Naive thymus-derived CD4-positive, alpha-beta T cell (primary cell): ENCODE measurements at regions of chr13 and their contacts with region 1.

Region 1: DNA sequence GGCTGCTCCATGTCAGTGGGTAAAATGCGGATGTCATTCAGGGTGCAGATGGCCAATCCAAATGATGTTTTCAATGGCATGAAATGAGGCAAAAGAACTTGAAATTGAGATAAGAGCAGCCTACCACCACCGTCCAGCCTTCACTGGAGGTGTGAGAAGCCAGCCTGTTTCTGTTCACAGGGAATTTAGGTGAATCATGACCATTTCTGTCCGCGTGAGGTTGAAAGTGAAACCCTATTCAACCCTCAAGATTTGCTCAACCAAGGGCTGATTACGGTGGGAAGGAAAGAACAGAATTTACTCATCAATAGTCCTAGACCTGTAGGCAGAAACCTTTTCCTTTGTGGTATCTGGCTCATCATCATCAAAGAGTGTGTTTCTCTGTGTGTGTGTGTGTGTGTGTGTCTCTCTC is 370.7 kb downstream of the COG6 start:
- DNase-seq: peak in 8 of 9 donors; percentile 8 to 63 (median 32)
- ATAC-seq: peak; percentile 77
- H3K4me3 ChIP-seq: peak overlapping the region; percentile 43
- H3K4me3 Mint-ChIP-seq: peak overlapping the region; percentile 39 to 79 (median 68)
- H3K27ac ChIP-seq: no peak overlapping the region
- H3K27ac Mint-ChIP-seq: peak overlapping the region; percentile 24 to 78 (median 44)
- H3K4me1 ChIP-seq: peaks cover 0 to 10% of the 10 kb centered on the region in 2 donors
- H3K4me1 Mint-ChIP-seq: peaks cover 6 to 34% (median 22%) of the 10 kb centered on the region in 7 donors
- H3K27me3 ChIP-seq: no peaks in the 10 kb centered on the region
- H3K27me3 Mint-ChIP-seq: peaks cover 0 to 35% (median 0%) of the 10 kb centered on the region in 5 donors

Region 2: DNA sequence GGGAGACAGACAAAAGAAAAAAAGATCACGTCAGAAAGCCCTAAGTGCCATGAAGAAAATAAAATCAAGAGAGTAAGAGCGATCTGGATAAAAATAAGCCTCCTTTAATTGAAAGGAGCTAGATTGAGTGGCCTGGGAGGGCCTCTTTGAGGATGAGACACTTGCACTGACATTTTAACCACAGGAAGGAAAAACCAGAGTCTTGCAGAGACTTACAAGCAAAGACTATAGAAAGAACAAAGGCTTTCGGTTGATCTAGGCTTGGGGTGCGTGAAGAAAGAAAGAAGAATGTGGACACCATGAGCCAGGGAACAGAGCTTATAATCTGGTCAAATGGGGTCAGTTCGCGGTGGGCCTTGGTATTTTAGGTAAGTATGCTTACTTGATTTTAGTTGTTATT is 28.0 kb before region 1 on chr13:
- CTCF ChIA-PET with region 1: no interaction called
- POLR2A ChIA-PET with region 1: interaction called, 3 read pairs
- intact Hi-C with region 1: loop called (anchors 1 to 5 kb)
- DNase-seq: peak in 7 of 9 donors; percentile 47 to 72 (median 61)
- ATAC-seq: peak; percentile 80
- H3K4me3 ChIP-seq: no peak overlapping the region
- H3K4me3 Mint-ChIP-seq: peak overlapping the region; percentile 6 to 82 (median 62)
- H3K27ac ChIP-seq: no peak overlapping the region
- H3K27ac Mint-ChIP-seq: peak overlapping the region in 8 of 9 donors; percentile 3 to 82 (median 68)
- H3K4me1 ChIP-seq: peaks cover 0 to 22% of the 10 kb centered on the region in 2 donors
- H3K4me1 Mint-ChIP-seq: peaks cover 12 to 45% (median 36%) of the 10 kb centered on the region in 7 donors
- H3K27me3 ChIP-seq: no peaks in the 10 kb centered on the region
- H3K27me3 Mint-ChIP-seq: peaks cover 0 to 19% (median 0%) of the 10 kb centered on the region in 5 donors

Region 3: DNA sequence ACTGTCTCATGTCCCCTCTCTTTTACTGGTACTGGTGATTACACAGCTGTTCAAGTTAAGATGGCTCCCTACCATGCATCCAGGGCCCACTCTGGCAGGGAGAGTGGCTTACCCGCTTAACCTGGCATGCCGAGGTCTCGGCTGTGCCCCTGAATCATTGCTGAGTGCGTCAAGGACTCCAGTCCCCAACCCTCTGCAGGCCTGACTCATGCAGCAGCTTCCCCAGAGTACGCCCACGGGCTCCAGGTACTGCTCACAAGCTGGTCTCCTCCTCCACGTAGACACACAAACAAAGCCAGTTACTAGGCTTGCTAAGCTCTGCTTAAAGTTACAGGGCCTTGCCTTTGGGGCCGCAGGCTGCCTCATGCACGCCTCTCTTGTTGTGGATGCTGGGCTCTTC is 76.7 kb after region 1 on chr13:
- CTCF ChIA-PET with region 1: no interaction called
- POLR2A ChIA-PET with region 1: no interaction called
- intact Hi-C with region 1: loop called in 1 of 2 experiments (anchors 5 kb)
- DNase-seq: peak in 3 of 9 donors; percentile 8 to 81 (median 10)
- ATAC-seq: peak; percentile 42
- H3K4me3 ChIP-seq: no peak overlapping the region
- H3K4me3 Mint-ChIP-seq: peak overlapping the region in 1 of 10 donors; percentile 55
- H3K27ac ChIP-seq: no peak overlapping the region
- H3K27ac Mint-ChIP-seq: peak overlapping the region in 5 of 9 donors; percentile 17 to 90 (median 65)
- H3K4me1 ChIP-seq: no peaks in the 10 kb centered on the region
- H3K4me1 Mint-ChIP-seq: peaks cover 5 to 45% (median 22%) of the 10 kb centered on the region in 7 donors
- H3K27me3 ChIP-seq: no peaks in the 10 kb centered on the region
- H3K27me3 Mint-ChIP-seq: no peaks in the 10 kb centered on the region

Region 4: DNA sequence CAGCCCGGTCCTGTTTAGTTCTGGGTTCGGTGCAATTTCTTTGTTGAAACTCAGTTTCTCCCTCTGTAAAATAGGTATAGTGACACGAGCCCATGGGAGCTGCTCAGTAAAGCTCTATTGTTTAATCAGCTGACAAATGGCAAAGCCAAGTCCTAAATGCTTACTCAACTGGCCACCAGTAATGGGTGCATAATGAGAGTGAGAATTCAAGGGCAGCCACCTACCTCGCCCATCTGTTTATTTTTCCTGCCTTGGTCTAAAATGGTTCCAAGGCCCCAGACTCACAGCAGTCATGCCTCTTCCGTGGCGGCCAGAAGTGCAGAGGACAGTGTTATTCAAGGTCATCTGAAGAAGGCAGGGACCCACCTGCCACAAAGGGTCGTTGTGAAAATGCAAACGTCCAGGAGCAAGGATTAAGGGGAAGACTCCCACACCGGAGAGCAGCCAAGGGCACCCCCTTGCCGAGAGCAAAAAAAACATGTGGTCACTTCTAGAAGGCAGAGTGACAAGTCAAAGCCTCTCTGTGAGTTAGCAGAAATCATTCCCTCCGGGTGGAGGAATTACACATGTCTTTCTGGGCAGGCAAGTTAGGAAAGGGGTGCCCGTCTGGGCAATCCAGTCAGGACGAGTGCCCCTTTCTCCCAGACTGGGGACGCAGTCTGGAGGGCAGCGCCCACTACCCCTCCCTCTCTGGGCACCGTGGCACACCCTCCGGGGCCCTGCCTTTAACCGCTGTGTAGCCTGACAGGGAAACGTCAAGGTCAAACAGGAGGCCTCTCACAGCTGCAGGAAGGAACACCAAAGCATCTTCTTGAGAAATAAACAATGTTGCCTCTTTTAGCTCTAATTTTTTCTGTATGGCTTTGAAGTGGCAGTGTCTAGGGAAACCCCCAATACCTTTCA is 454.1 kb after region 1 on chr13:
- CTCF ChIA-PET with region 1: no interaction called
- POLR2A ChIA-PET with region 1: no interaction called
- intact Hi-C with region 1: loop called in 1 of 2 experiments (anchors 5 kb)
- DNase-seq: peak in 1 of 9 donors; percentile 28
- ATAC-seq: peak; percentile 3
- H3K4me3 ChIP-seq: no peak overlapping the region
- H3K4me3 Mint-ChIP-seq: peak overlapping the region in 9 of 10 donors; percentile 55 to 79 (median 70)
- H3K27ac ChIP-seq: no peak overlapping the region
- H3K27ac Mint-ChIP-seq: peak overlapping the region; percentile 56 to 99 (median 91)
- H3K4me1 ChIP-seq: peaks cover 19 to 60% of the 10 kb centered on the region in 2 donors
- H3K4me1 Mint-ChIP-seq: peaks cover 34 to 89% (median 79%) of the 10 kb centered on the region in 7 donors
- H3K27me3 ChIP-seq: no peaks in the 10 kb centered on the region
- H3K27me3 Mint-ChIP-seq: no peaks in the 10 kb centered on the region